ENCODE measurements at regions of chr5 and their contacts with region 1.

Region 1: GRCh38 chr5:149500922-149501582 is 50.2 kb downstream of the CSNK1A1 start:
- DNase-seq: no peak
- ATAC-seq: no peak
- H3K4me3 ChIP-seq: no peak overlapping the region
- H3K4me3 Mint-ChIP-seq: no peak overlapping the region
- H3K27ac ChIP-seq: no peak overlapping the region
- H3K27ac Mint-ChIP-seq: no peak overlapping the region
- H3K4me1 ChIP-seq: no peaks in the 10 kb centered on the region
- H3K4me1 Mint-ChIP-seq: no peaks in the 10 kb centered on the region
- H3K27me3 ChIP-seq: no peaks in the 10 kb centered on the region
- H3K27me3 Mint-ChIP-seq: no peaks in the 10 kb centered on the region

Region 2: DNA sequence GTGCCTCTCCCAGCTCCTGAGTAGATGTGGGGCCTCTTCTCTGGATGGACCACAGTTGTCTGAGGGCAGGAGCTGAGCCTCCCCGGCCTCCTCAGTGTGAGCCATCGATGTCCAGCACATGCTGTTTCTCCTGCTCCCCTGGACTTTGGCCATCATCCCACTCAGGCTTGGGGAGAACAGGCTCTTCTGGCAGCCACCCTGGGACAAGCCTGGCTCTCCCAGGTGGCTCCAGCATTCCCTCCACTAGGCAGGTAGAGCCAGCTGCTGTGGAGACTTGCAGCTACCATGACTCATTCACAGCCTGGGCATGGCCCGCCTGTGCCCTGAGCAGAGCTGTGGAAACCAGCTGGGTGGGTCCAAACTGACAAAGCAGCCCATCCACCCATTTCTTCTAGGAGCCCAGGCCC is 26.8 kb before region 1 on chr5:
- CTCF ChIA-PET with region 1: no interaction called
- POLR2A ChIA-PET with region 1: no interaction called
- DNase-seq: no peak
- ATAC-seq: no peak
- H3K4me3 ChIP-seq: no peak overlapping the region
- H3K4me3 Mint-ChIP-seq: no peak overlapping the region
- H3K27ac ChIP-seq: no peak overlapping the region
- H3K27ac Mint-ChIP-seq: no peak overlapping the region
- H3K4me1 ChIP-seq: no peaks in the 10 kb centered on the region
- H3K4me1 Mint-ChIP-seq: no peaks in the 10 kb centered on the region
- H3K27me3 ChIP-seq: peaks cover 0 to 25% of the 10 kb centered on the region in 2 experiments
- H3K27me3 Mint-ChIP-seq: peaks cover 5 to 9% of the 10 kb centered on the region in 2 donors

Region 3: DNA sequence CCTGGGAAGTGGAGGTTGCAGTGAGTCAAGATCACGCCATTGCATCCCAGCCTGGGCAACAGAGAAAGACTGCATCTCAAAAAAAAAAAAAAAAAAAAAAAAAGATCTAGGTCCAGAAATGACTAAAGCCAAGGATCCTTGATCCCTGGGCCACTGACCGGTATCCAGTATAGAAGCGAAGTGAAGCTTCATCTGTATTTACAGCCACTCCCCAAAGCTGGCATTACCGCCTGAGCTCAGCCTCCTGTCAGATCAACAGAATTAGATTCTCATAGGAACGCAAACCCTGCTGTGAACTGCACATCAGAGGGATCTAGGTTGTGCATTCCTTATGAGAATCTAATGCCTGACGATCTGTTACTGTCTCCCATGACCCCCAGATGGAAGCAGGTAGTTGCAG is 40.8 kb after region 1 on chr5:
- CTCF ChIA-PET with region 1: interaction called in 1 of 2 experiments, 3 read pairs
- POLR2A ChIA-PET with region 1: interaction called, 4 to 10 read pairs
- DNase-seq: no peak
- ATAC-seq: no peak
- H3K4me3 ChIP-seq: no peak overlapping the region
- H3K4me3 Mint-ChIP-seq: peak overlapping the region in 1 of 3 donors; percentile 25
- H3K27ac ChIP-seq: no peak overlapping the region
- H3K27ac Mint-ChIP-seq: no peak overlapping the region
- H3K4me1 ChIP-seq: peaks cover 23 to 43% of the 10 kb centered on the region in 2 experiments
- H3K4me1 Mint-ChIP-seq: peaks cover 64 to 77% (median 76%) of the 10 kb centered on the region in 3 donors
- H3K27me3 ChIP-seq: no peaks in the 10 kb centered on the region
- H3K27me3 Mint-ChIP-seq: no peaks in the 10 kb centered on the region

Region 4: GRCh38 chr5:149596713-149597112 is 95.7 kb after region 1 on chr5:
- CTCF ChIA-PET with region 1: no interaction called
- POLR2A ChIA-PET with region 1: no interaction called
- DNase-seq: no peak
- ATAC-seq: no peak
- H3K4me3 ChIP-seq: no peak overlapping the region
- H3K4me3 Mint-ChIP-seq: no peak overlapping the region
- H3K27ac ChIP-seq: no peak overlapping the region
- H3K27ac Mint-ChIP-seq: no peak overlapping the region
- H3K4me1 ChIP-seq: no peaks in the 10 kb centered on the region
- H3K4me1 Mint-ChIP-seq: peaks cover 0 to 7% (median 0%) of the 10 kb centered on the region in 3 donors
- H3K27me3 ChIP-seq: no peaks in the 10 kb centered on the region
- H3K27me3 Mint-ChIP-seq: peaks cover 0 to 8% of the 10 kb centered on the region in 2 donors

Measured in T-cell (primary cell).